ENCODE measurements at regions of chr16 and their contacts with region 1.

Region 1: GRCh38 chr16:22190776-22191531 is 15.1 kb upstream of the EEF2K start:
- DNase-seq: peak; percentile 97
- H3K4me3 ChIP-seq: peak overlapping the region; percentile 69
- CTCF ChIP-seq: no peak

Region 2: DNA sequence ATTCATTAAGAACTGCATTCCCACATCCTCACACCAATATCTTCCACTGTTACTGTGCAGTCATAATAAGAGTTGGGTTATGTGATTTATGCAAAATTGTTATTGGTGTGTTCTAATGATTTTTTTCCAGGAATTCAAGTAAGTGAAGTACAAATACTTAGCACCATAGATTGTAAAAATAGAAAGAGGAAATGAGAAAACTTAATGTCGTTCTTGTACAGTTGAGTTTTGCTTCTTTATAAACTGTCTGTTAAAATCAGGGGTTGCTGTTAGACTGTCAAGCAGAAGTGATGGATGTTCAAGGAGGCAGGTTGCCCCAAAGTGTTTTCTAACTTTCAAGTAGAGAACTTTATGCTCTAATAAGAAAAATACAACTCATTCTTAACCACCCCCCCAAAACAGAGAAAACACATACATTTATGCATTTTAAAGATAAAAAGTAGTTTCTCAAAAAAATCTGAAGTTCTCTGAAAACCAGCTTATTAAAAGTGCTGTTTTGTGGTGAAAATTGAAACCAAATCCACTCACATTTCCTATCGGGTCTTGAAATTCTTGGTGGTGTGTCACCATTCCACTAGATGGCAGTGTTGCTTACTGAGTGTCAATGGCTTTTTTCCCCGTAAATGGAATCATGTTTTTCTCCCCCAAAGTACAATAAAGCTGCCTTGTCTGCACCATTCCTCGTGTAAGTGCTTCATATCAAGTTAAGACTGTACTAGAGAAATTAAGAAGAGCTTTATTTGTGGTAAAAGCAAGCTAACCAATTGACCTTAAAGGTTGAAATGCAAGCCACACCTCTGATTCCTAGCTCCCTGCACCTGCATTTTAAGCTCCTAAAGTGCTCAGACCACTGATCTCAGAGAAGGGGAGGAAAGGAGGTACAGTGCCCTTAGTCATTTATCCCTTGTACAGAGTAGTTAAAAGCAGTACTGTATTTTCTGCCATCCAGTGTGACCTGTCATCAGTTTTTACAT is 533.9 kb before region 1 on chr16:
- CTCF ChIA-PET with region 1: interaction called, 12 read pairs
- POLR2A ChIA-PET with region 1: no interaction called
- DNase-seq: no peak
- H3K4me3 ChIP-seq: no peak overlapping the region
- CTCF ChIP-seq: peak; percentile 73

Region 3: DNA sequence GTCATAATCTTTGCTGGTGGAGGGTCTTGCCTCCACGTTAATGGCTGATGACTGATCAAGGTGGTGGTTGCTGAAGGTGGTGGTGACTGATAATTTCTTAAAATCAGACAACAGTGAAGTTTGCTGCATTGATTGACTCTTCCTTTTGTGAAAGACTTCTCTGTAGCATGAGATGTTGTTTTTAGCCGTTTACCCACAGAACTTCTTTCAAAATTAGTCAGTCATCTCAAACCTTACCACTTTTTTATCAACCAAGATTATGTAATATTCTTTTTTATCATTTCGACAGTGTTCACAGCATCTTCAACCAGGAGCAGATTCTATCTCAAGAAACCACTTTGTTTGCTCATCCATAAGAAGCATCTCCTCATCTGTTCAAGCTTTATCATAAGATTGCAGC is 231.9 kb before region 1 on chr16:
- CTCF ChIA-PET with region 1: interaction called, 21 read pairs
- POLR2A ChIA-PET with region 1: interaction called, 3 read pairs
- DNase-seq: no peak
- H3K4me3 ChIP-seq: no peak overlapping the region
- CTCF ChIP-seq: no peak

Region 4: GRCh38 chr16:21989133-21989532 is 201.8 kb before region 1 on chr16:
- CTCF ChIA-PET with region 1: interaction called, 29 read pairs
- POLR2A ChIA-PET with region 1: no interaction called
- DNase-seq: peak; percentile 16
- H3K4me3 ChIP-seq: no peak overlapping the region
- CTCF ChIP-seq: no peak

Region 5: DNA sequence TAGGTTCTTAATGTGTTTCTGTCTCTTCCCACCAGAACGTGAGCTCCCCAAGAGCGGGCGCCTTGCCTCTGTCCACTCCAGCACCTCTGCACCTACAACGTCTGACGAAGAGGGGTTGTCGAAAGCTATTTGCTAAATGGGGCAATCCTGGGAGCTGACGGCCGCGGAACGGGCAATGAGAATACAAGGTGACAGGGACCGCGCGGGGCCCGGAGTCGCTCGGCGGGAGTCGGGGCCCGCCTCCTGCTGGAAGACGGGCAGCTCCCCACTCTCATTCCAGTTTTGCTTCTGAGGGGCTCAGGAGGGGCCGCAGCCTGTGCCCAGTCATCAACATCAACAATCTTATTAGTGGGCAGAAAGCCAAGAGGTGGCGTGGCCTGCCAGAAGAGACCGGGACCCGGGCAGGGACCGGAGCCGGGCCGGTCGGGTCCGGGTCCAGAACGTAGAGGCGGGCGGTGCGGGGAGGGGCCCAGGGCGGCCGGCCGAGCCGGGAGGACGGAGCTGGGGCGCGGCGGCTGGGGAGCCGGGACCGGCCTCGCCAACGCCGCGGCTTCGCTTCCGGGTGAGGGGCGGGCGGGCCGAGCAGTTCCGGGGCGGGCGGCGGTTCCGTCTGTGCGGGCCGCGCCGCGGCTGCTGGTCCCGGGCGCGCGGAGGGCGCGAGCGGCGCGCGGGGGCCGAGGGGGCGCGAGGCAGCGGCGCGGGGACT is 183.3 kb before region 1 on chr16 and contains the start of gene MOSMO:
- CTCF ChIA-PET with region 1: interaction called, 272 read pairs
- POLR2A ChIA-PET with region 1: interaction called, 4 read pairs
- DNase-seq: no peak
- H3K4me3 ChIP-seq: peak within 1 kb of the TSS; percentile 80
- CTCF ChIP-seq: no peak

Region 6: DNA sequence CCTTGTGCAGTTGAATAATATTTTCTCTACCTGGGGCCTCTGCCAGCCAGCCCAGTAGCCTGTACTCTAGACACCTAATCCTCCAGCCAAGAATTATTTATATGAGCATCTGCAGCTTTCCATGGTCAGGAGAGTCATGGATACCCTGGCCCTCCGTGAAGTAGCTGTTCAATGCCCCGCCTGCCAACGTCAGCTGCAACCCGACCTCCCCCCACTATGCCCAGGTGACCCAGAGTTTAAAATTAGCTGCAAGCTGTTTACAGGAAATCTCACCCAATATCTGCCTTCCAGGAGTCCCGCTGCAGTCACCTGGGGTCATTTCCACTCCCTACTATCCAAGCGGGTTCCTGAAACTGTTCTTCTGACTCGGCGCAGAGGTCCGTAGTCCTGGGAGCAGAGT is 16.3 kb before region 1 on chr16:
- CTCF ChIA-PET with region 1: interaction called, 19 read pairs
- POLR2A ChIA-PET with region 1: no interaction called
- DNase-seq: no peak
- H3K4me3 ChIP-seq: no peak overlapping the region
- CTCF ChIP-seq: no peak

Region 7: DNA sequence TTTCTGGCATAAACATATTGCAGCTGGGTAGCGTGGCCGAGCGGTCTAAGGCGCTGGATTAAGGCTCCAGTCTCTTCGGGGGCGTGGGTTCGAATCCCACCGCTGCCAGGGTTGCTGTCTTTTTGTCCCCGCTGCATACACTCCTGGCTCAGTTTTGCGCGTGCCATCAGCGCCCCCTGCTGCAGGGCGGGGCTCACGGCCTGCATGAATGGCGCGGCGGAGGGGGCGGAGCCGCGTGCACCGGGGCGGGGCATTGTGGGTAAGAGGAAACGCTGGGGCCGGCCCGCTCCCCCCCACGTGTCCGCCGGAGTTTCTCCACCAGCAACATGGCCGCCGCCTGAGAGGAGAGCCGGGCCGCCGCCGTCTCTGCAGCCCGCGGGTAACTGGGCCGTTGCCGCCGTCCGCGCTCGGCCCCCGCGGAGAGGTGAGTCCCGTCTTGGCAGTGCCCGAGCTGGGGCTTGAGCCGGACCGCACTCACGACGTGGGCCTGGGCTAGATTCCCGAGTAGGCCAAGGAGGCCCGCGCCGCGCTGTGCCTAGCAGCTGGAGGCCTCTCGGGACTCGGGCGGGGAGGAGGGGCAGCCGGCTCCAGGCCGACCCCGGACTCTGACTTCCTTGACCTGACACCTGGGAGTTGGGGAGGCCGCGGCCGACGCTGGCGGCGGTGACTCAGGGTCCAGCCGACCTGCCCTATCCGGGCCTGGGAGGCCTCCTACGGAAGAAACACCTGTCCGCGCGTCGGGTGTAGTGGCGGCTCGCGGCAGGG is 106.3 kb after region 1 on chr16 and contains the start of gene POLR3E:
- CTCF ChIA-PET with region 1: interaction called, 200 read pairs
- POLR2A ChIA-PET with region 1: no interaction called
- DNase-seq: peak; percentile 77
- H3K4me3 ChIP-seq: peak within 1 kb of the TSS; percentile 88
- CTCF ChIP-seq: peak; percentile 96

Measured in AG04449 (cell line).